IMR-90 (cell line): ENCODE measurements at regions of chr13 and their contacts with region 1.

Region 1: DNA sequence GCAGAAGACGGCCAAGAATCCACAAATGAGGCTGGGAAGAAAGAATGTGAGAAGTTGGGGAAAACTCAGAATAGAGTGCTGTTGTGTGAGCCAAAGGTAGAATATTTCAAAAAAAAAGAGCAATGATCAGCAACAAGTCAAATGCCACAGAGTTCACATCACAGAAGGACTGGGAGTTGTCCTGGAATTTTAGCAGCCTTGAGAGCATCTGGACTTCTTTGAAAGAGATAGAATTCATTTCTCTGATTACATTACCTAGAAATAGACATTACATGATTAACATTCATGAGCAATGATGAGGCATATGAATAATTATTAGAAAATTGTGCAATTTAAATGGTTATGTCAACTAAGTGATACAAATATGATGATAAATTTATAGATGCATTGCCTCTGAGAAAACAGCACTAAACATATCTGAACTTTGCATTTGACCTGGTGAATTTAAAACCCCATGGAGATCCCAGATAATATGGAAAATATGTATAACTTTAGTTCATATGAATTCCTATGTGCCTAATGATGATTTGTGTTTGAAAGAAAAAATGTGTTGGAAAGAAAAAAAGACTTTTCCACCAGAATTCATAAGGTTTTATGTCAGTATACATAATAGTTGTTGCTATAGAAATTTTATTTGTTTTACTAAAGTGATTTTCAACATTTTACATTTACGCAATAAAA is 186.2 kb downstream of the POSTN start:
- DNase-seq: peak; percentile 74
- ATAC-seq: peak; percentile 68
- H3K4me3 ChIP-seq: no peak overlapping the region
- H3K27ac ChIP-seq: no peak overlapping the region
- H3K4me1 ChIP-seq: peaks cover 3% of the 10 kb centered on the region
- H3K27me3 ChIP-seq: no peaks in the 10 kb centered on the region
- CTCF ChIP-seq: no peak
- POLR2A ChIP-seq: no peak
- RAD21 ChIP-seq: no peak

Region 2: DNA sequence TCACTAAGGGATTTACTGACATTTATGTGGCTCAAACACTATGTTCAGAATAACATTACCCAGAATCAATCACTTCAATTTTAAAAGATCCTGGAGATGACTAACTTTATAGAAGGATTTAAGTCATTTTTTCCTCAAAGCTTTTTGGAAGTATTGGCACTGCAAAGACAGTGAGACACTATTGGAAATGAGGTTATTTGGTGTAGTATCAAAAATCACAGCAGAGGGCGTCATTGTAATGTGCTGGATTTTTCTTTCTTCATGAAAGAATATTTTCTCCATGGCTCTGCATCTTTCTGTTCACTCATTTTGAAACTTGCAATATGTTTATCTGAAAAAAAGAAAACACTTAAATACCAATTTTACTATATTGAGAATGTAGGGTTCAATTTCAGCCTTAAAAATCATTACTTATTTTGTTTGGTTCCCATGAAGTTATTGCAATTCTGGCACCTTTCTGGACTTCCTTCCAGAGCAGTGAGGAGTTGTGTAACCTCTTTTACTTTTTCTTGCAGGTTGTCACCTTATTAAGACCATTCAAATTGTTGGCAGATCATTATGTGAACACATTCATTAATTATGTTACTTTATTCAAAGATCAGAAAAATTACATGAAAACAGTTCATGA is 303.2 kb before region 1 on chr13:
- CTCF ChIA-PET with region 1: no interaction called
- POLR2A ChIA-PET with region 1: no interaction called
- dilution Hi-C with region 1: no loop called
- in situ Hi-C with region 1: no loop called
- intact Hi-C with region 1: loop called (anchors 5 kb)
- DNase-seq: peak; percentile 62
- ATAC-seq: peak; percentile 67
- H3K4me3 ChIP-seq: no peak overlapping the region
- H3K27ac ChIP-seq: no peak overlapping the region
- H3K4me1 ChIP-seq: no peaks in the 10 kb centered on the region
- H3K27me3 ChIP-seq: no peaks in the 10 kb centered on the region
- CTCF ChIP-seq: peak; percentile 89
- POLR2A ChIP-seq: 0 out of 2 replicates have a peak, but pooled peaks have one; percentile 56
- RAD21 ChIP-seq: peak; percentile 96

Region 3: GRCh38 chr13:37194428-37194861 is 217.9 kb before region 1 on chr13:
- CTCF ChIA-PET with region 1: no interaction called
- POLR2A ChIA-PET with region 1: no interaction called
- dilution Hi-C with region 1: no loop called
- in situ Hi-C with region 1: no loop called
- intact Hi-C with region 1: loop called (anchors 10 kb)
- DNase-seq: peak; percentile 82
- ATAC-seq: peak; percentile 73
- H3K4me3 ChIP-seq: no peak overlapping the region
- H3K27ac ChIP-seq: no peak overlapping the region
- H3K4me1 ChIP-seq: peaks cover 8% of the 10 kb centered on the region; the same call in 1 of the 2 replicates
- H3K27me3 ChIP-seq: no peaks in the 10 kb centered on the region
- CTCF ChIP-seq: no peak
- POLR2A ChIP-seq: no peak
- RAD21 ChIP-seq: no peak

Region 4: GRCh38 chr13:37382146-37382545 is 30.2 kb before region 1 on chr13:
- CTCF ChIA-PET with region 1: interaction called, 10 read pairs
- POLR2A ChIA-PET with region 1: no interaction called
- dilution Hi-C with region 1: no loop called
- in situ Hi-C with region 1: no loop called
- intact Hi-C with region 1: no loop called
- DNase-seq: peak; percentile 23
- ATAC-seq: peak; percentile 38; the same call in 1 of the 2 replicates
- H3K4me3 ChIP-seq: no peak overlapping the region
- H3K27ac ChIP-seq: no peak overlapping the region
- H3K4me1 ChIP-seq: peaks cover 5% of the 10 kb centered on the region
- H3K27me3 ChIP-seq: no peaks in the 10 kb centered on the region
- CTCF ChIP-seq: no peak
- POLR2A ChIP-seq: no peak
- RAD21 ChIP-seq: no peak

Region 5: DNA sequence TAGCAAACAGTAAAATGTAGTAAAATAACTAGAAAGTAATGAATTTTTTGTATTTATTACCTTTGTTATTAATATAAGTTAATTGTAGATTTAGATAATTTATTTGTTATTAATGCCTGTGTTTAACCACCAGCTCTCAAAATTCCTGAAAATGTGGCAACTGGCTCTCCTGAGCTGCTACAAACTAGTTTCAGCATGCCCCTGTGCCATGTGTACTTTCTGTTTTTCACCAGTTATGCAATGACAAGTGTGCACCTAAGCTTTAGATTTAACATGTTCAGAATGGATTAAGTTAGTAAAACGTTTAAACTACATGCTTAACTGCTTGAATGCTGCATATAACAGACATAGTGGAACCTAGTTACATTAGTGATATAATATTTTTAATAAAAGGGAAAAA is 98.1 kb after region 1 on chr13:
- CTCF ChIA-PET with region 1: no interaction called
- POLR2A ChIA-PET with region 1: no interaction called
- dilution Hi-C with region 1: no loop called
- in situ Hi-C with region 1: no loop called
- intact Hi-C with region 1: no loop called
- DNase-seq: no peak
- ATAC-seq: no peak
- H3K4me3 ChIP-seq: no peak overlapping the region
- H3K27ac ChIP-seq: no peak overlapping the region
- H3K4me1 ChIP-seq: no peaks in the 10 kb centered on the region
- H3K27me3 ChIP-seq: no peaks in the 10 kb centered on the region
- CTCF ChIP-seq: no peak
- POLR2A ChIP-seq: no peak
- RAD21 ChIP-seq: no peak